Activated naive CD4-positive, alpha-beta T cell treated with anti-CD3 and anti-CD28 coated beads for 36 hours (primary cell): ENCODE measurements at regions of chr6 and their contacts with region 1.

Region 1: DNA sequence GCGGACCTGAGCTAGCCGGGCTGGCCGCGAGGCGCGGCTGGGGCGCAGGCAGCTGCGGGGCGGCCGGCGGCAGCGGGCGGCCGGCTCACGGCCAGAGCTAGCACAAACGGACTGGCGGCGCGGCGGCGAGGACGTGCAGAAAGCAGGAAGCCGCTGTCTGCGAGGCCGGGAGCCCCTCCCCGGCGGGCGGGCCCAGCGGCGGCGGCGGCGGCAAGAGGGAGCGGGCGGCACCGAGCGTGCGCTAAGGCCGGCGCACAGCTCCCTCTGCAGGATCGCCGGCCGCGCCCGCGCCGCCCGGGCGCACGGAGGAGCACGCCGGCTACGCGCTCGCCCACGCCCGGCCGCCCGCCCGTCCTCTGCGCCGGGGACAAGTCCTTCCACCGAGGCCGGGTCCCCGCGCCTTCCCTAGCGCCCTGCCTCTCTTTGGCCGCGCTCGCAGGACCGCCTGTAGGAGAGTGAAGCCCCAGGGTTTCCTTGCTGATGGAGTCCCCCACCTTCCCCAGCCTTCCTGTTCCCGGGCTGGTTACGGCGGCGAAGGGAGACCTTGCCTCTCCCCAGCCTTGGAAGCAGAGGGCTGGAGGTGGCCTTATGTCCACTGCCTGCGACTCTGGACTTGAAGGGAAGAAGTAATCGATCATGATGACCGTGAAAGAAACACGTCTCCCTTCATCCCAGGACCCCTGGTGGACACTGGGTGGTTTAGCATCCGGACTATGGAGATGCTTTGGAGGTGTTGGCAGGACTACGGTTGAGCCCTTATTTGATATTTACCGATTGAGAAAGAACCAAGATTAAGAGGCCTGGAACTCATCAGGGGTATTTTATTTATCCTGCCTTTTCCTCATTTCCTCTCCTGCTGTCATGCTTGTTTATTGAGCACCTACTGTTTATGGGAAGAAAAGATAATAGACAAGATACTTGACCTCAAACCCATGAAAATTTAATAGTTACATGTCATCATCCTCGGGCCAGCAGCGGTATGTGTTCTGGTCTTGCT is at the start of gene PREP:
- DNase-seq: peak; percentile 82
- H3K4me3 Mint-ChIP-seq: peak within 1 kb of the TSS; percentile 88
- H3K27ac Mint-ChIP-seq: peak within 1 kb of the TSS; percentile 59
- H3K4me1 Mint-ChIP-seq: peaks cover 56% of the 10 kb centered on the region
- H3K27me3 Mint-ChIP-seq: peaks cover 5% of the 10 kb centered on the region
- total RNA-seq, gene PREP: 32.6 to 33.9 TPM

Region 2: GRCh38 chr6:104789770-104790190 is 613.5 kb before region 1 on chr6:
- CTCF ChIA-PET with region 1: no interaction called
- intact Hi-C with region 1: loop called (anchors 5 kb)
- DNase-seq: peak; percentile 49
- H3K4me3 Mint-ChIP-seq: peak overlapping the region; percentile 59
- H3K27ac Mint-ChIP-seq: peak overlapping the region; percentile 90
- H3K4me1 Mint-ChIP-seq: peaks cover 28% of the 10 kb centered on the region
- H3K27me3 Mint-ChIP-seq: no peaks in the 10 kb centered on the region

Region 3: DNA sequence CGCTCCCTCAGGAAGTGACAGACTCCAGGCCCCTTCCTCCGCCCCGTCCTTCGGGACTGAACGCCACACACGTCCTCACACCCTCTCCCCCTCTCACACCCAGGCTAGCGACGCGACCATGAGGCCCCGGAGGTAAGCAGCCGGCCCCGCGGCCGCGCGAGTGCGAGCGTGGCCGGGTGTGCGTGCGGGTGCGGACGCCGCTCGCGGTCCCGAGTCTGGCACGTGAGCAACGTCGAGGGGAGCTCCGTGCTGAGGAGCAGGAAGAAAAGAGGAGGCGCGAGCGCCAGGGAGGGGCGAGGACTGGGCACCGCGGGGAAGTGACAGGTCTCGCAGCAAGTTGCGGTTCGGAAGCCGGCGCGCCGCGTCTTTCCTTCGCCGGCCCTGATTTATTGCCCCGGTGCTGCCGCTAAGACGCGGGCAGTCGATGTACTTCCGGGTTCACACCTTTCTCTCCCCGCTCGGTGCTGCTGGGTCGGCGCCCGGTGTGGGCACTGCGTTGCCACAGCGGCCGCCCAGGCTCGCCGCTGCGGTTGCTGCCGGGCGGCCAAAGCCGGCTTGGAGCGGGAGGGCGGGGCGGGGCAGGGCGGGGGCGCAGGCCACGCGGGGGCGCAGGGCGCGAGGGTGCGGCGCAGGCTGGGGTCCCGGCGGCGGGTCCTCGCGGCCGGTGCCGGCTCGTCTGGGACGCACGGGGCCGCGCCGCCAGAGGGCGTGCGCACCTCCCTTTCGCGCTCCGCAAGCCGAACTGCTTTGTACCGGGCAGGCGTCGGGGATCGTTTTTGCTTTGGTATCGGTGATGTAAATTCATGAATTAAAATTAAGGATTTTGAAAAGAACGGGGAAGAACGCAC is 462.1 kb before region 1 on chr6:
- CTCF ChIA-PET with region 1: no interaction called
- intact Hi-C with region 1: loop called (anchors 1 kb)
- DNase-seq: peak; percentile 45
- H3K4me3 Mint-ChIP-seq: peak overlapping the region; percentile 65
- H3K27ac Mint-ChIP-seq: no peak overlapping the region
- H3K4me1 Mint-ChIP-seq: peaks cover 5% of the 10 kb centered on the region
- H3K27me3 Mint-ChIP-seq: peaks cover 43% of the 10 kb centered on the region

Region 4: GRCh38 chr6:105136431-105137350 is 266.5 kb before region 1 on chr6:
- CTCF ChIA-PET with region 1: no interaction called
- intact Hi-C with region 1: loop called (anchors 1 kb)
- DNase-seq: peak; percentile 13
- H3K4me3 Mint-ChIP-seq: peak overlapping the region; percentile 64
- H3K27ac Mint-ChIP-seq: no peak overlapping the region
- H3K4me1 Mint-ChIP-seq: peaks cover 5% of the 10 kb centered on the region
- H3K27me3 Mint-ChIP-seq: peaks cover 51% of the 10 kb centered on the region

Region 5: GRCh38 chr6:105317607-105318533 is 85.4 kb before region 1 on chr6:
- CTCF ChIA-PET with region 1: interaction called, 3 read pairs
- intact Hi-C with region 1: loop called (anchors 1 kb)
- DNase-seq: peak; percentile 7
- H3K4me3 Mint-ChIP-seq: no peak overlapping the region
- H3K27ac Mint-ChIP-seq: no peak overlapping the region
- H3K4me1 Mint-ChIP-seq: no peaks in the 10 kb centered on the region
- H3K27me3 Mint-ChIP-seq: no peaks in the 10 kb centered on the region